PC-9 (cell line): ENCODE measurements at regions of chr1 and their contacts with region 1.

Region 1: DNA sequence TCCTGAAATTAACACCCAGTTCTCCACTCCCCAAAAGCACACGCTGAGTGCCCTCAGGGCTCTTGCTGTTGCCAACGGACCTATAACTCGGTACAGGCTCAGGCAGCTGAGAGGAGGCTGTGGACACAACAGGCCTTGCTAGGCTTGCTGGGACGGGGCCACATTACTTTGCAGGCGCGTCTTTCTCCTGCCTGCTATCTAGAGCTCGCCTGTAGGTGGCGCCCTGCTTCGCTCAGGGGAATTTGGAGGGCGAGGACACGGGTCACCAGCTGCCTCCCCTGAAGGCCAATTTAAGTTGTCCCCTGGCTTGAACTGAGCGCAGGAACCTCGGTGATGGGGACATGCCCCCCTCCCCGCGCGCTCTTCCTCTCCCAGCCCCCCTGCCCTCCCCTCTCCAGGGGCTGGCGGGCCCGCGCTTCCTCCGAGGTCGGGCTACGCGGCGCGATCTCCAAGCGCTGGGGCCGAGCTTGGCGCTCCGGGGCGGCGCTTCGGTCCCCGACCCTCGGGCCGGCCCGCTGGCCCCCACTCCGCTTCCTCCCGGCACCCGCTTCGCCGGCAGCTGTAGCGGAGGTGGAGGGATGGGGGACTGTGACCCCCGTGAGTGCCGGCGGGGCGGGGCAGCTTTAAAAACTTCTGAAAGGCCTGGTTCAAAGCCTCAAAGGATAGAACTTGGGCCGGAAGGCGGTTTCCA is 32.4 kb upstream of the NFIA start:
- DNase-seq: peak; percentile 77 to 91
- H3K4me3 ChIP-seq: peak overlapping the region; percentile 88
- H3K27ac ChIP-seq: no peak overlapping the region
- H3K4me1 ChIP-seq: peaks cover 4% of the 10 kb centered on the region; the same call in 1 of the 2 replicates
- H3K27me3 ChIP-seq: no peaks in the 10 kb centered on the region
- CTCF ChIP-seq: peak; percentile 93

Region 2: DNA sequence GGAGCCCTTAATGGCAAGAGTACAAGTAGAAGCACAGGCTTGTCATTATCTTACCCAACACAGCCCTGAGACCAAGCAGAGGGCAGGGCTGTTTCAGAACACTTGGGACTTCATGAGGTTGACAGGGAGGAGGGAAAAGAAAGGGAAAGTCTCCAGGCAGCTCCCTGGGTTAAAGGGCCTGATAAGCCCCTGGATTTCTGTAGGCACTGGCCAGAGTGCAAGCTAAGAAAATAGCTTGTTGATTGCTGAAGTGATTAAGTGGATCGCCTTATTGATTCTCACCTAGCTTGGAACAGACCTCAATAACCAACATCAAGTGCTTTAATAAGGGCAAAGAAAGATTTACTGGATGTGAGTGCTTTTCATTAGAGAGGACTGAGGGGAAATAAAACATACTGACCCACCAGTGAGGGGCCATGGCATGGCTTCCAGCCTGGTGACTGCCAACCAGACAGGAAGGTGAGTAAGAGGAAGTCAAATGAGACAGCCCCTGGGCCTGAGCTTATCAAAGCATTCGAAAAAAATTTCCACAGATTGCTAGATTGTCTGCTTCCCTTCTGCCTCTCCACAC is 89.0 kb before region 1 on chr1:
- CTCF ChIA-PET with region 1: no interaction called
- POLR2A ChIA-PET with region 1: no interaction called
- intact Hi-C with region 1: no loop called
- DNase-seq: no peak
- H3K4me3 ChIP-seq: no peak overlapping the region
- H3K27ac ChIP-seq: no peak overlapping the region
- H3K4me1 ChIP-seq: peaks cover 4% of the 10 kb centered on the region; the same call in 1 of the 2 replicates
- H3K27me3 ChIP-seq: no peaks in the 10 kb centered on the region
- CTCF ChIP-seq: no peak

Region 3: GRCh38 chr1:61064673-61065072 is 14.7 kb after region 1 on chr1:
- CTCF ChIA-PET with region 1: interaction called, 9 read pairs
- POLR2A ChIA-PET with region 1: interaction called, 15 read pairs
- intact Hi-C with region 1: no loop called
- DNase-seq: no peak
- H3K4me3 ChIP-seq: no peak overlapping the region
- H3K27ac ChIP-seq: no peak overlapping the region
- H3K4me1 ChIP-seq: peaks cover 21% of the 10 kb centered on the region
- H3K27me3 ChIP-seq: no peaks in the 10 kb centered on the region
- CTCF ChIP-seq: no peak

Region 4: DNA sequence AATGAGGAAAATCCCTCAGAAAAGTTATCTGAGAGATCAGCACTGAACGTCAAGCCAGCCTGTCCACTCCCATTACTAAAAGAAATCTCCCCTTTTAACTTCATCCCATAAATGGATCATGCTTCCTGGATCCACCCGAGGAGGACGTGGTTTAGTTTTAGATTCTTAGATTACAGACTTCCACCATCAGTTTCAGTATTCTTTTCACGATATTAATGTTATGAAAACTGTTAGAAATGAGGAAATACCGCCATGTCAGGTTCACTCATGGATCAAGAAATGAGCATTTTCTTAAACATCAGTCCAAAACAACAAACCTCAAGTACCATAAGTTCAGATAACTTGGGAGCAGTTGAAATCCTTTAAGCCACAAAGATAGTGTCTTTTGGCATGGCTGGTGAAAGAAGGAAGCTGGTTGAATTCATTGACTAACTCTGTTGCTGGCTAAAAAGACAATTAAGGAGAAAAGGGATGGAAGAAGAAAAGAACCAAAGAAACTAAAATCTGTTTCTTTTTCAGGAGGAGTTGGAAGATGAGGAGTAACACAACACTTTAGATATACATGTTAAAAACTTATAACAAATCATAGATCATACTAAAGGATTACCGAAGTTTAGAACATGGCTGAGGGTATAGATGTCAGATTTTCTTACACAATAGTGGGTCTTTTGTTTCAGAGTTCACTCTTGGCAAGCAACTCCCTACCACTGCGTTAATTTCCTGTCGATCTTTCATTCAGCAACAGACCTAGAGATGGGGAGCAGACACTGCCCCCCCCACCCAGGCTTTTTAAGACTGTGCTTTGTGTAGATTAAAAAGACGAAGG is 82.4 kb after region 1 on chr1:
- CTCF ChIA-PET with region 1: interaction called, 6 read pairs
- POLR2A ChIA-PET with region 1: no interaction called
- intact Hi-C with region 1: loop called (anchors 2 kb)
- DNase-seq: no peak
- H3K4me3 ChIP-seq: no peak overlapping the region
- H3K27ac ChIP-seq: peak overlapping the region; percentile 65
- H3K4me1 ChIP-seq: peaks cover 30% of the 10 kb centered on the region
- H3K27me3 ChIP-seq: no peaks in the 10 kb centered on the region
- CTCF ChIP-seq: no peak

Region 5: GRCh38 chr1:61170328-61171238 is 120.6 kb after region 1 on chr1:
- CTCF ChIA-PET with region 1: no interaction called
- POLR2A ChIA-PET with region 1: no interaction called
- intact Hi-C with region 1: no loop called
- DNase-seq: peak in 1 of 2 experiments; percentile 68
- H3K4me3 ChIP-seq: no peak overlapping the region
- H3K27ac ChIP-seq: peak overlapping the region; percentile 31; the same call in 1 of the 2 replicates
- H3K4me1 ChIP-seq: peaks cover 19% of the 10 kb centered on the region
- H3K27me3 ChIP-seq: no peaks in the 10 kb centered on the region
- CTCF ChIP-seq: no peak

Region 6: DNA sequence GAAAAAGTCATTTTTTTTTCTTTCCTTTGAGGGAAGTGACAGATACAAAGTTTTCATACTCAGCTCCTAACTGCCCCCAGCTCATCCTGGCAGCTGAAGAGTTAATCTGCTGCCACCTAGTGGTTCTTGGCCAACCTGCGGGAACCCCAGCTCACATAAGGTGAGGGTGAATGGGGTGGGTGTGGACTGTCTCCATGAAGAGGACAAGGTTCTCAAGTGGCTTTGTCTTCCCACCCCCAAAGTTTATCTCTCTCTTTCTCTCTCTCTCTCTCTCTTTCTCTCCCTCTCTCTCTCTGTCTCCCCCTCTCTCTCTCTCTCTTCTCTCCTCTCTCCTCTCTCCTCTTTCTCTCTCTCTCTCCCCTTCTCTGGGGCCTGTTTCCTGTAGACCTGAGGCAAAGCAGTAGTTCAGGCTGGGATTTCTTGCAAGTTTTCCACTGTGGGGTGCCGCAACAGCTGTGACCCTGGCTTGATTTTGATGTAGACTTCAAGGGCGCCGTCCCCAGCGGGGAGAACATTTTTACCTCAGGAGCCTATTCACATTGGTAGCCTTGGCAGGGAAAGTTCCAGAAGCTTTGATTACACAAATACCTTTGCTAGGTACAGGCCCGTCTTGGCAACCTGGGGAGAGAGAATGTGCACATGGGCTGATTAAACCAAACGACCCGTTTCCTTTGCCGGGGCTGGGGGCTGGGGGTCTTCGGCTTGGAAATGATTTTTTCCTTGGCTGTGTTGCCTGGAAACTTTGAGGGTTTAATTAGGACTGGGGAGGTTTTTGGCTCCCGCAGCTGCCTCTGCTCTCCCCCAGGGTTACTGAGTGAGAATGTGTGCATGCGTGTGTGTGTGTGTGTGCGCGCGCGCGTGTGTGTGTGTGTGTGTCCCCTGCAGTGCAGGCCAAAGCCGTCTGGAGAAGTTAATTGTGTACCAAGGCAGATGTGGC is 539.0 kb after region 1 on chr1:
- CTCF ChIA-PET with region 1: interaction called, 4 read pairs
- POLR2A ChIA-PET with region 1: no interaction called
- intact Hi-C with region 1: loop called (anchors 1 kb)
- DNase-seq: peak; percentile 53 to 69
- H3K4me3 ChIP-seq: no peak overlapping the region
- H3K27ac ChIP-seq: no peak overlapping the region
- H3K4me1 ChIP-seq: no peaks in the 10 kb centered on the region
- H3K27me3 ChIP-seq: no peaks in the 10 kb centered on the region
- CTCF ChIP-seq: peak; percentile 90

Region 7: DNA sequence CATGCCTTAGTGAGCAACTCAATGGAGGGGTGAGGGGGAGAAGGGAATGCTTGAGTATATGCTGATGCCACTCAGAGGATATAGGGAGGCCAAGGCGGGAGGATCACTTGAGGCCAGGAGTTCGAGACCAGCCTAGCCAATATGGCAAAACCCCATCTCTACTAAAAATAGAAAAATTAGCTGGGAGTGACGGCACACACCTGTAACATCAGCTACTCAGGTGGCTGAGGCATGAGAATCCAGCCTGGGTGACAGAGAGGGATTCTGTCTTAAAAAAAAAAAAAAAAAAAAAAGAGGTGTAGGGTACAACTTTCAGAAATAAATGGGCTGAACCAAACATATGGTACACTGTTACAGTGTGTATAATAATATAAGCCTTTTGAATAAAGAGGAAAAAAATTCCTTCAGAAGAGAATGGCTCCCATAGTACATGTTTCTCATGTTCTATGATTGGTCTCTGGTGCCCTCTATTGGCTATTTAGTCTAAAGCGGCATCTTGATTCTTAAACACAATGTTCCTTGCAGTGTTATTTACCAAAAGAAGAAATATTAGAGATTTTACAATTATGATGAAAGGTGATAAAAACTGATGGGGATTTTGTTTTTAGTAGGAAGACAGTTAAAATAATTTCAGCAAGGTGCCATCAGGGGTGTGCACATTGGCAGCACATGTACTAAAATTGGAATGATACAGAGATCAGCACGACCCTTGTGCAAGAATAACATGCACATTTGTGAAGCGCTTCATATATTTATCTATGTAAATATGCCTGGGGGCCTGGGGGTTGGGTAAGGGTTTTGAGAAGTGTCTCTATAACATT is 802.1 kb after region 1 on chr1:
- CTCF ChIA-PET with region 1: no interaction called
- POLR2A ChIA-PET with region 1: no interaction called
- intact Hi-C with region 1: loop called (anchors 2 kb)
- DNase-seq: peak in 1 of 2 experiments; percentile 37
- H3K4me3 ChIP-seq: no peak overlapping the region
- H3K27ac ChIP-seq: no peak overlapping the region
- H3K4me1 ChIP-seq: no peaks in the 10 kb centered on the region
- H3K27me3 ChIP-seq: no peaks in the 10 kb centered on the region
- CTCF ChIP-seq: peak; percentile 78